IMR-90 (cell line): ENCODE measurements at regions of chr10 and their contacts with region 1.

Region 1: DNA sequence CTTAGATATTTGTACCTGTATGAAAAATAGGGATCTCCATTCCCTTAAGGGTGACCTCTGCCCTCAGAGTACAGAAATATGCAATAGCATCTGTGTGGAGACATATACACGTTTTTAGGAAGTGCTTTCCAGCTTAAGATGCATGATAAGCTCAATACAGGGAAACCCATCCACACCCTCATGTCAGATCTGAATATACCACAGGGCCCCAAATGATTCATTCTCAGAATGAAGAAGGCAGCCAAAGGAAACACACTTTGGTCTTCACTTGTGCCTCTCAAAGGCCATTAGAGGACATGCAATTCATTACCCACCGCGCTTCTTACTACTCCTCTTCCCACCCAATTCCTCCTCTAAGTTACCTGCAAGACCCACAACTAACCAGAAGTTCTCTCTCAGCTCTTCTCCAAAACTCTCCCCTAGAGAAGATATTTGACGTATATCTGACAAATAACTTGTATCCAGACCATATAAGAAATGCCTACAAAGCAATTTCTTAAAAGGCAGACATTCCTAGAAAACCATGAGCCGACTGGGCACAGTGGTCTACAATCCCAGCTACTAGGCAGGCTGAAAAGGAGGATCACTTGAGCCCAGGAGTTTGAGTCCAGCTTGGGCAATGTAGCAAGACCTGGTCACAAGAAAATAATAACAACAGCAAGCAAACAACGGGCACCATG is 103.0 kb downstream of the OAT start:
- DNase-seq: no peak
- ATAC-seq: no peak
- H3K4me3 ChIP-seq: no peak overlapping the region
- H3K27ac ChIP-seq: no peak overlapping the region
- H3K4me1 ChIP-seq: no peaks in the 10 kb centered on the region
- H3K27me3 ChIP-seq: no peaks in the 10 kb centered on the region
- CTCF ChIP-seq: no peak
- POLR2A ChIP-seq: no peak
- RAD21 ChIP-seq: no peak

Region 2: DNA sequence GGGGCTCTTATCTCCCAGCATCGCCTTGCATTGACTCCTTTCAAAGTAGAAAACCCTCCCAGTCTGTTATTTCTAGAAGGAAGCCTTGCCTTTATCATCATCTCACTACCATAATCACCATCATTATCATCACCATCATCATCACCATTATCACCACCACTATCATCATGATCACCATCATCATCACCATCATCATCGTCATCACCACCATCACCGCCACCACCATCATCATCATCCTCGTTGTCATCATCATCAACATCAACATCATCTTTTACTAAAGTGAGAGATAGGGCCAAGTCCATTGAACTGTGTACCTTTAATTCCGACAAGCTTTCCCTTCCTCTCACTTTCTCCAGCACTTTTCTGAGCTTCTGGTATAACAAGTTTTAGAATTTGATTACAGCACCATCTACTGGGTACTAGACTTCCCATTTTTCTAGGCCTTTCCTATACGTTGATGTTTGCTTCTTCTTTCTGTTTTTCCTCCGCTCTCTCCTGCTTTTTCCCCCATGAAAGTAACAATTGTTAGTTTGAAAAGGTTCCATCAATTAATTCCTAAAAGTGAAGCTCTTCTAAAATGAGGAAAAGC is 935.1 kb before region 1 on chr10:
- CTCF ChIA-PET with region 1: no interaction called
- POLR2A ChIA-PET with region 1: no interaction called
- dilution Hi-C with region 1: no loop called
- in situ Hi-C with region 1: no loop called
- intact Hi-C with region 1: no loop called
- DNase-seq: no peak
- ATAC-seq: no peak
- H3K4me3 ChIP-seq: no peak overlapping the region
- H3K27ac ChIP-seq: no peak overlapping the region
- H3K4me1 ChIP-seq: no peaks in the 10 kb centered on the region
- H3K27me3 ChIP-seq: no peaks in the 10 kb centered on the region
- CTCF ChIP-seq: 0 out of 2 replicates have a peak, but pooled peaks have one; percentile 22
- POLR2A ChIP-seq: no peak
- RAD21 ChIP-seq: 0 out of 2 replicates have a peak, but pooled peaks have one; percentile 11

Region 3: DNA sequence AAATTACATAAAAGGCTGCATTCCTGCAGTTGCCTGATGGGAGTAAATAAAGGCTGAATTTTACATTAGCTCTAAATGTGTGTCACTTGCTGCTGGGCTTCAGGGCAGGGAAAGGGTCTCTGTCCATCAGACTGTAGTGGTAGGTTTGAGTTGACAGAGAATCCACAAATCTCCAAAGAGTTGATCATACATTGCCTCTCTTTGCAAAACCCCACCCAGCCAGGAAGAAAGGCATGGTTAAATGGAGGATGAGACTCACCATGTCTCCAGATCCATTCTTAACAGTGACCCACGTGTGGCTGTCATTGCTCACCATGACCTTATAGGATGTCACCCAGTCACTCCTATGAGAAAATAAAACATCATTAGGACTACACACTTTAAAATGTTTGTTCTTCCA is 516.9 kb before region 1 on chr10:
- CTCF ChIA-PET with region 1: no interaction called
- POLR2A ChIA-PET with region 1: interaction called, 10 read pairs
- dilution Hi-C with region 1: no loop called
- in situ Hi-C with region 1: no loop called
- intact Hi-C with region 1: no loop called
- DNase-seq: no peak
- ATAC-seq: no peak
- H3K4me3 ChIP-seq: no peak overlapping the region
- H3K27ac ChIP-seq: no peak overlapping the region
- H3K4me1 ChIP-seq: no peaks in the 10 kb centered on the region
- H3K27me3 ChIP-seq: no peaks in the 10 kb centered on the region
- CTCF ChIP-seq: no peak
- POLR2A ChIP-seq: no peak
- RAD21 ChIP-seq: no peak